ENCODE measurements at regions of chr17 and their contacts with region 1.

Region 1: DNA sequence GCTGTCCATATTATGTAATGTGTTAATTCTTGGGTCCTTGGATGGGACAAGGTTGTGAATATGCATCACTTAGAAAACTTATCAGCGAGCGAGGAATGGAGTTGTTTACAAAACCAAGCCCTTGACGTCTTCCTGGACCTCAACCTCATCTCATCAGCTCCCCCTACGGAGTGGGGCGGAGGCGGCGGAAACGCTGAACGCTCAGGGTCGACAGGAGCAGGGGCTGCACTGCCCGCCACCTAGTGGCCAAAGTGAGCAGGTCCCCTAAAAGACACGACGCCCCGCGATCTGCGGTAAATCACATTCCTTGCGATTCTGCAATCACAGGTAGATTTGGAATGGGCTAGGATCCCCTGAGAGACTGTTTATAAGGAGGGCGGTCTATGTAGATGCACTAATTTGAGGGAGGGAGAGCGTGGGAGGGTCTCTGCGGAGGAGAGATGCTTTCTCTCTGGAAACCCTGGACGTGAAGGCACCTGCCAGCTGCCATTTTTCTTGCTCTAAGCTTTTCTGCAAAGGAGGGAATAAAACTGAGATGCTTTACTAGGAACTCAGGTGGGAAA is 5.4 kb upstream of the ICAM2 start:
- DNase-seq: peak; percentile 76 to 98 (median 95)
- ATAC-seq: peak; percentile 95
- H3K4me3 ChIP-seq: peak overlapping the region; percentile 64
- H3K4me3 Mint-ChIP-seq: peak overlapping the region; percentile 74 to 93 (median 83)
- H3K27ac ChIP-seq: peak overlapping the region; percentile 79
- H3K27ac Mint-ChIP-seq: peak overlapping the region; percentile 87 to 100 (median 96)
- H3K4me1 ChIP-seq: peaks cover 49 to 51% of the 10 kb centered on the region in 2 donors
- H3K4me1 Mint-ChIP-seq: peaks cover 37 to 73% (median 68%) of the 10 kb centered on the region in 7 donors
- H3K27me3 ChIP-seq: no peaks in the 10 kb centered on the region
- H3K27me3 Mint-ChIP-seq: no peaks in the 10 kb centered on the region

Region 2: DNA sequence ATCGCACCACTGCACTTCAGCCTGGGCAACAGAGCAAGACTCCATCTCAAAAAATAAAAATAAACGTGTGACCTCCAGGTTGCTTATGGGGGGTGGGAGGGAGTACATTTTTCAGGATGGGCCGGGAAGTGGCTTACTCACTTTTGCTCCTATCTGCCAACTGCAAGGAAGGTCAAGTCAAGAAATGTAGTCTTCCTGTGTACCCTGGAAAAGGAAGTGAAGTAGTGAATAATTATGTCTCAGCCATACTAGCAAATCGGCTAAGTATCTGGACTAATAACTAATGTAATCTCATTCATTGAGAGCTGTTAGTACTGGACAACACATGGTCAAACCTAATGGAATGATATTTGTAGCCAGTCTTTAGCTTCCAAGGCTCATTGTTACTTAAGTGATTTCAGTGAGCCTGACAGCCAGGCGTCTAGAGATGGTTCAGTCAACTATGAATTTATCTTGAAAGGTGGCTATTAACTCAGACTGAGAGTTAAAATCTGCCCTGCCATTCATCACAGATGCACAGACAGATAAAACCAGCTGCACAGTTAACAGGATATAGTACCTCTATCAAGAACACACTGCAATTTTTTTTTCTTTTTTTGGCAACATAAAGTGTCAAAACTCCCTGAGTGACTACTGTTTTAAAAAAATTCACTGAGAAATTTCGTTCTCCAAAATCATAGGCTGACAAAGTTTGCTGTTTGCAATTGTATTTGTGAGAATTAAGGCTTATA is 428.8 kb before region 1 on chr17:
- CTCF ChIA-PET with region 1: no interaction called
- POLR2A ChIA-PET with region 1: no interaction called
- intact Hi-C with region 1: no loop called
- DNase-seq: no peak
- ATAC-seq: peak; percentile 32
- H3K4me3 ChIP-seq: no peak overlapping the region
- H3K4me3 Mint-ChIP-seq: no peak overlapping the region
- H3K27ac ChIP-seq: no peak overlapping the region
- H3K27ac Mint-ChIP-seq: peak overlapping the region in 2 of 9 donors; percentile 25 to 34
- H3K4me1 ChIP-seq: peaks cover 16 to 34% of the 10 kb centered on the region in 2 donors
- H3K4me1 Mint-ChIP-seq: peaks cover 13 to 31% (median 23%) of the 10 kb centered on the region in 7 donors
- H3K27me3 ChIP-seq: no peaks in the 10 kb centered on the region
- H3K27me3 Mint-ChIP-seq: no peaks in the 10 kb centered on the region

Region 3: DNA sequence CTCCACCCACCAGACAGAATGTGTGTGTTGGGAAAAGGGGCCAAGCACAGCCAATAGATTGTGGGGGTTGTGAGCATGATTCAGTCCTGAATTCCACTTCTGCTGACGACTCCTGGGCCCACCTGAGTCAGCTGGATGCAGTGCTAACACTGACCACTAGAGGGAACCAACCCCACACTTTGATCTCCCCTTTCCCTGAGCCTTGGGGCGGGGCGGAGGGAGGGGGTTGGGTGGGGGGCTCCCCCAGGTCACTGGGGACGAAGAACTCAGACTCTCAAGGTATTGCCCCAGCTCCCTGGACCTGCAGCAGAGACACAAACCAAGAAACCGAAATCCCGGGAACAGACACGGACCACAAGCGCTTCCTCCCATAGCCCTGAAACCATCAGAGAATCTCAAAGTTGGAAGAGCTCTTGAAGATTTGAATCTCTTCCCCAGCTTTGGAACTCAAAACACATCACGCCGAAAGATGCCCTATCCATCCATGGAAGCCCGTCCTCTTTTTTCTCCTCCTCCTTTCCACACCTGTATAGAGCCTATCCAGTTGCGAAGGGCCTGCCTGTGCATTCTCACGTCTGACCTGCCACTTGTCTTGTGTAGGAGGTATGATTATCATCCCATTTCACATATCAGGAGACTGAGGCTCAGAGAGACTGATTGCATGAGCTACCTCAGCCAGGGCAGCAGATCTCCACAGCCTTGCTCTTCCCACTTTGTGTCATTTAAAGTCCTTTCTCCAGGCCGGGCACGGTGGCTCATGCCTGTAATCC is 114.0 kb before region 1 on chr17:
- CTCF ChIA-PET with region 1: interaction called, 22 read pairs
- POLR2A ChIA-PET with region 1: interaction called, 5 read pairs
- intact Hi-C with region 1: no loop called
- DNase-seq: peak; percentile 30 to 64 (median 49)
- ATAC-seq: peak; percentile 88
- H3K4me3 ChIP-seq: no peak overlapping the region
- H3K4me3 Mint-ChIP-seq: peak overlapping the region in 1 of 10 donors; percentile 25
- H3K27ac ChIP-seq: no peak overlapping the region
- H3K27ac Mint-ChIP-seq: peak overlapping the region in 1 of 9 donors; percentile 78
- H3K4me1 ChIP-seq: no peaks in the 10 kb centered on the region
- H3K4me1 Mint-ChIP-seq: peaks cover 0 to 10% (median 0%) of the 10 kb centered on the region in 7 donors
- H3K27me3 ChIP-seq: no peaks in the 10 kb centered on the region
- H3K27me3 Mint-ChIP-seq: peaks cover 0 to 28% (median 0%) of the 10 kb centered on the region in 5 donors

Region 4: GRCh38 chr17:63946440-63947367 is 79.1 kb before region 1 on chr17:
- CTCF ChIA-PET with region 1: interaction called, 7 read pairs
- POLR2A ChIA-PET with region 1: interaction called, 8 read pairs
- intact Hi-C with region 1: loop called in 1 of 2 experiments (anchors 2 kb)
- DNase-seq: peak; percentile 32 to 71 (median 53)
- ATAC-seq: peak; percentile 87
- H3K4me3 ChIP-seq: peak overlapping the region; percentile 44
- H3K4me3 Mint-ChIP-seq: peak overlapping the region; percentile 59 to 86 (median 73)
- H3K27ac ChIP-seq: no peak overlapping the region
- H3K27ac Mint-ChIP-seq: peak overlapping the region in 5 of 9 donors; percentile 25 to 85 (median 39)
- H3K4me1 ChIP-seq: peaks cover 14 to 17% of the 10 kb centered on the region in 2 donors
- H3K4me1 Mint-ChIP-seq: peaks cover 9 to 19% (median 12%) of the 10 kb centered on the region in 7 donors
- H3K27me3 ChIP-seq: no peaks in the 10 kb centered on the region
- H3K27me3 Mint-ChIP-seq: peaks cover 0 to 7% (median 0%) of the 10 kb centered on the region in 5 donors

Region 5: DNA sequence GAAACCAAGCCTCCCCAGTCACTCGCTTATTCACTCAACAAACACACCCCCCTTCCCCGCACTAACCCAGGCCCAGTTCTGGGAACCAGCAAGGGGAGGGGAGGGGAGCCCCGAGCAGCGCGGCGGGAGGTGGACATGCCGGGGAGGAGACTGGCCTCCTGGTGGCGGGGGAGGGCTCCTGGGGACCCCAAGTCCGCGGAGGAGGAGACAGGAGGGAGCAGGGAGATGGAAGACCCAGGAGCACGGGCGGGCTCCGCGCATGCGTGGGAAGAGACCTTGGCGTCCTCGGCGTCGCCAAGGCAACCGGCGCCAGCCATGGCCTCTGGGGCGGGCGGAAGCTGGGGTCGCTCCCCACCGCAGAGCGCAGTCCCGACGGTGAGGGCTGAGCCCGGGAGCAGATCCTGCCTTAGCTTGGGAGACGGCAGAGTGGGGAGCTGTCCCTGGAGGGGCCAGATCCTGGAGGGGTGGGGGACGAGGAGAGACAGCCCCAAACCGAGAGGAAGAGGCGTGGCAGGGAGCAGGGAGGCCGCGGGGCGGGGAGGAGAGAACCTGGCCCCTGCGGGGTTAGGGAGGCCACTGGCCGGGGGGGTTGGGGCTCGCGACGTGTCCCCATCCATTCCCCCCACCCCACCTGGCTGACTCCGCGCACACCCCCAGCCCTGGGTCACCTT is 27.6 kb before region 1 on chr17 and contains the start of gene PRR29:
- CTCF ChIA-PET with region 1: interaction called, 20 read pairs
- POLR2A ChIA-PET with region 1: interaction called, 58 read pairs
- intact Hi-C with region 1: loop called (anchors 1 kb)
- DNase-seq: peak; percentile 65 to 76 (median 71)
- ATAC-seq: peak; percentile 78
- H3K4me3 ChIP-seq: peak within 1 kb of the TSS; percentile 81
- H3K4me3 Mint-ChIP-seq: peak within 1 kb of the TSS; percentile 79 to 96 (median 90)
- H3K27ac ChIP-seq: peak within 1 kb of the TSS; percentile 53
- H3K27ac Mint-ChIP-seq: peak within 1 kb of the TSS; percentile 64 to 86 (median 82)
- H3K4me1 ChIP-seq: peaks cover 20 to 32% of the 10 kb centered on the region in 2 donors
- H3K4me1 Mint-ChIP-seq: peaks cover 30 to 51% (median 44%) of the 10 kb centered on the region in 7 donors
- H3K27me3 ChIP-seq: no peaks in the 10 kb centered on the region
- H3K27me3 Mint-ChIP-seq: peaks cover 0 to 17% (median 0%) of the 10 kb centered on the region in 5 donors
- total RNA-seq, gene PRR29: 0.29 to 2.8 (median 0.40) TPM in 3 of 5 experiments, not detected in the others

Region 6: DNA sequence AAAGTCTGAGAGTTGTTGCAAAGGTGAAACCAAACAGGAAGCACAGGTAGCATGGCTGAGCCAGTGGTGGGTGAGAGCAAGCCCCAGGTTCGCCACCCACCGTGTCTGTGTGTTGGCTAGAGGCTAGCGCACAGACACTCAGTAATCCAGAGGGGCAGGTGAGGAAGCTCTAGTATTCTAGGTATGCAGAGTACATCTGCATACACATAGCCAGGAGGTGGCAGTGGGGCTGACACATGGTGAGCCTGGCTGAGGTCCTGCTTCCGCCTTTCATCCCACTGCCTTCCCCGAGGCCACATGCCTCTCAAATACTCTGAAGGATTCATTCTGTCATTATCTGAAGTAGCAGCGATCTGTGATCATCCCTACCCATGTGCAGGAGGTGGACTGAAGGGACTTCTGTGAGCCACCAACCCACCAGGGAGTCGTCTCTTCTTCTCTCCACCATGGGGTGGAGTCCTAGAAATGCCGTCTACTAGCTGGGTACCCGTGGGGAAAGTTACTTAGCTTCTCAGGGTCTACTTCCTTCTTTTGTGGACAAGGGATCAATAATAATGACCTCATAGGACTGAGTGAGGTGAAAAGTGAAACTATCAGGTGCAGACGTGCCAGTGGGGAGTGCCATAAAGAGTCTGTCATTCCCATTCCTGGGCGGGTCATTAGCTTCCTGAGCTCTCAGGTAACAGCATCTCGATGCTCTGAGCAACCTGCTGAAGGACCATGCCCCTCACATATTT is 30.6 kb after region 1 on chr17:
- CTCF ChIA-PET with region 1: interaction called, 28 read pairs
- POLR2A ChIA-PET with region 1: interaction called, 19 read pairs
- intact Hi-C with region 1: loop called in 1 of 2 experiments (anchors 1 kb)
- DNase-seq: no peak
- ATAC-seq: peak; percentile 37
- H3K4me3 ChIP-seq: no peak overlapping the region
- H3K4me3 Mint-ChIP-seq: peak overlapping the region in 2 of 10 donors; percentile 2 to 59
- H3K27ac ChIP-seq: no peak overlapping the region
- H3K27ac Mint-ChIP-seq: peak overlapping the region; percentile 24 to 88 (median 79)
- H3K4me1 ChIP-seq: peaks cover 19 to 48% of the 10 kb centered on the region in 2 donors
- H3K4me1 Mint-ChIP-seq: peaks cover 17 to 70% (median 31%) of the 10 kb centered on the region in 7 donors
- H3K27me3 ChIP-seq: no peaks in the 10 kb centered on the region
- H3K27me3 Mint-ChIP-seq: no peaks in the 10 kb centered on the region

Region 7: GRCh38 chr17:64129764-64130558 is 104.1 kb after region 1 on chr17 and contains the start of gene ERN1:
- CTCF ChIA-PET with region 1: interaction called, 289 read pairs
- POLR2A ChIA-PET with region 1: interaction called, 132 read pairs
- intact Hi-C with region 1: loop called (anchors 1 kb)
- DNase-seq: peak; percentile 84 to 93 (median 91)
- ATAC-seq: peak; percentile 96
- H3K4me3 ChIP-seq: peak within 1 kb of the TSS; percentile 69
- H3K4me3 Mint-ChIP-seq: peak within 1 kb of the TSS; percentile 85 to 97 (median 94)
- H3K27ac ChIP-seq: peak within 1 kb of the TSS; percentile 77
- H3K27ac Mint-ChIP-seq: peak within 1 kb of the TSS; percentile 83 to 98 (median 93)
- H3K4me1 ChIP-seq: peaks cover 12 to 32% of the 10 kb centered on the region in 2 donors
- H3K4me1 Mint-ChIP-seq: peaks cover 28 to 57% (median 53%) of the 10 kb centered on the region in 7 donors
- H3K27me3 ChIP-seq: no peaks in the 10 kb centered on the region
- H3K27me3 Mint-ChIP-seq: no peaks in the 10 kb centered on the region
- total RNA-seq, gene ERN1: 52.6 to 110 (median 62.9) TPM

Region 8: GRCh38 chr17:64216338-64217248 is 190.8 kb after region 1 on chr17:
- CTCF ChIA-PET with region 1: no interaction called
- POLR2A ChIA-PET with region 1: no interaction called
- intact Hi-C with region 1: no loop called
- DNase-seq: no peak
- ATAC-seq: no peak
- H3K4me3 ChIP-seq: no peak overlapping the region
- H3K4me3 Mint-ChIP-seq: peak overlapping the region in 1 of 10 donors; percentile 36
- H3K27ac ChIP-seq: no peak overlapping the region
- H3K27ac Mint-ChIP-seq: peak overlapping the region in 7 of 9 donors; percentile 44 to 88 (median 77)
- H3K4me1 ChIP-seq: peaks cover 0 to 7% of the 10 kb centered on the region in 2 donors
- H3K4me1 Mint-ChIP-seq: peaks cover 9 to 47% (median 40%) of the 10 kb centered on the region in 7 donors
- H3K27me3 ChIP-seq: no peaks in the 10 kb centered on the region
- H3K27me3 Mint-ChIP-seq: no peaks in the 10 kb centered on the region

Region 9: DNA sequence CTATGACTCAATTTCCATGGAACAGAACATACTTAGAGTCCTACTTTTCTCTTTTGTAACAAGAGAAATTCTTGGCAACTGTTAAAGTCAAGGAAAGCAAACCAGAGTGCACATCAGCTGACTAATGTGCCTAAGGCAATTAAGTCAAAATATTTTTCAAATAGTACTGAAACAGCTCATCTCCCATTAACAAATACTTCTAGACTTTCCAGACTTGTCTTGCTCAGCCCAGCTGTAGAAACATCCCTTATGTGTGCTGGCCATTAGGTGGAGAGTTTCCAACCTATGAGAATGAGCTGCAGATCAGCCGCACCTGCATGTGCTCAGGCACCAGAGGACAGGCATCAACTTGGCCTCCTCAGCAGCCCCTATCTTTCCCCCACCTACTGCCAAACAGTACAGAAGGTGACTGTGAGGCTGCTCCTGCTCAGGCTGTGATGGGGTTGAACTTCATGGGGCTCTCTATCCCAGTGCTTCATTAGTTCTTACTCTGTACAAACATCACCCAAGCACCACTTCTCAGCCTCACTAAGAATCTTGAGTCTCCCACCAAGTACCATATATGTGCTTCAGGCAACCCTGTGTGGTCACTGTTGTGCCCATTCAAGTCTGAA is 205.1 kb after region 1 on chr17:
- CTCF ChIA-PET with region 1: no interaction called
- POLR2A ChIA-PET with region 1: no interaction called
- intact Hi-C with region 1: no loop called
- DNase-seq: no peak
- ATAC-seq: no peak
- H3K4me3 ChIP-seq: no peak overlapping the region
- H3K4me3 Mint-ChIP-seq: no peak overlapping the region
- H3K27ac ChIP-seq: no peak overlapping the region
- H3K27ac Mint-ChIP-seq: peak overlapping the region in 1 of 9 donors; percentile 43
- H3K4me1 ChIP-seq: no peaks in the 10 kb centered on the region
- H3K4me1 Mint-ChIP-seq: peaks cover 0 to 8% (median 6%) of the 10 kb centered on the region in 7 donors
- H3K27me3 ChIP-seq: no peaks in the 10 kb centered on the region
- H3K27me3 Mint-ChIP-seq: no peaks in the 10 kb centered on the region

Measured in naive thymus-derived CD4-positive, alpha-beta T cell (primary cell).